ENCODE measurements at regions of chr20 and their contacts with region 1.

Region 1: DNA sequence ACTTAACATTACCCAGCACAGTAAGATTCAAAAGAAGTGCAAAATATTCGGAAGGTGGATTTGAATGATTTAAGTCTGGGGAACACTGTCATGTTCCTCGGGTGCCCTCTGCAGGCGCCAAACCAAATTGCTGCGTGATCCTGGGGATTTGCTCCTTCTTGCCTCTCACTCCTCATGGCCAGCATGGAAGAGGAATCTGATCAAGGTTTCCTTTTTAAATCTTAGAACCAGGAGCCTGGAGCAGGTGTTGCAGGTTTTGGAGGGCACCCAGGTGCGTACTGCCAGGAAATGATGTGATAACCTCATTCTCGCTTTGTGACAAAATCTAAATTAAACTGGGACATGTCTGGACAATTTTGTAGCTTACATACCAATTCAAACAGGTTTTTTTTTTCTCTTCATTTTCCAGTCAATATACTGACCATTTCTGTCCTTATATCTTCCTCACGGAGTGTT is 8.1 kb upstream of the PFDN4 start:
- H3K4me3 ChIP-seq: no peak overlapping the region
- H3K27ac ChIP-seq: no peak overlapping the region
- H3K4me1 ChIP-seq: no peaks in the 10 kb centered on the region
- CTCF ChIP-seq: peak; percentile 68

Region 2: GRCh38 chr20:54090056-54090816 is 109.5 kb before region 1 on chr20:
- CTCF ChIA-PET with region 1: interaction called, 361 read pairs
- POLR2A ChIA-PET with region 1: no interaction called
- H3K4me3 ChIP-seq: no peak overlapping the region
- H3K27ac ChIP-seq: no peak overlapping the region
- H3K4me1 ChIP-seq: no peaks in the 10 kb centered on the region
- CTCF ChIP-seq: no peak

Region 3: GRCh38 chr20:54097236-54097529 is 102.6 kb before region 1 on chr20:
- CTCF ChIA-PET with region 1: interaction called, 361 read pairs
- POLR2A ChIA-PET with region 1: no interaction called
- H3K4me3 ChIP-seq: no peak overlapping the region
- H3K27ac ChIP-seq: no peak overlapping the region
- H3K4me1 ChIP-seq: no peaks in the 10 kb centered on the region
- CTCF ChIP-seq: no peak

Region 4: DNA sequence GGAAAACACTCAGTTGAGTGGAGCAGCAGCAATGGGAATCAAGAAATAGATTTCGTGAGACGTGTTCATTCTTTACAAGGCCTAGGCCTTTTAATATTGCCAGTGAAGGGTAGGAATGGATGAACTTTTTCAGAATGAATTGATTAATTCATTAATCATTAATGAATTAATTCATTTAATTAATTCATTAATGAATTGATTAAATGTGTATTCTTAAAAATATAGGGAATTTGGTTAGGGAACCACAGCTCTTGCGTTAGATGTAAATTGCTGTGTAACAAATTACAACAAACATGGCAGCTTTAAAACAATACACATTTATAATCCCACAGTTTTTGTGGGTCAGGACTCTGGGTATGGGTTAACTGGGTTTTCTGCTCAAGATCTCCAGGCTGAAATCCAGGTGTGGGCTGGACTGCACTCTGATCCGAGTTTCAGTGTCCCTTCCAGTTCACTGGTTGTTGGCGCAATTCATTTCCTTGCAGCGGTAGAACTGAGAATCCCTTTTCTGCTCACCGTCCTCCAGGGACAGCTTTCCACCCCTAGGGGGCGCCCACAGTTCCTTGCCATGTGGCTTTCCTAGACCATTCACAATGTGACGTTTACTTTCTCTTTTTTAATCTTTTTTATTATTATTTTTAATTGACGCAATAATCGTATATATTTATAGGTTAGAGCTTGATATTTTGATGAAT is 96.5 kb before region 1 on chr20:
- CTCF ChIA-PET with region 1: interaction called, 361 read pairs
- POLR2A ChIA-PET with region 1: no interaction called
- H3K4me3 ChIP-seq: no peak overlapping the region
- H3K27ac ChIP-seq: no peak overlapping the region
- H3K4me1 ChIP-seq: no peaks in the 10 kb centered on the region
- CTCF ChIP-seq: peak; percentile 72

Region 5: GRCh38 chr20:54179946-54180345 is 19.8 kb before region 1 on chr20:
- CTCF ChIA-PET with region 1: interaction called, 23 read pairs
- POLR2A ChIA-PET with region 1: no interaction called
- H3K4me3 ChIP-seq: no peak overlapping the region
- H3K27ac ChIP-seq: no peak overlapping the region
- H3K4me1 ChIP-seq: no peaks in the 10 kb centered on the region
- CTCF ChIP-seq: no peak

Region 6: DNA sequence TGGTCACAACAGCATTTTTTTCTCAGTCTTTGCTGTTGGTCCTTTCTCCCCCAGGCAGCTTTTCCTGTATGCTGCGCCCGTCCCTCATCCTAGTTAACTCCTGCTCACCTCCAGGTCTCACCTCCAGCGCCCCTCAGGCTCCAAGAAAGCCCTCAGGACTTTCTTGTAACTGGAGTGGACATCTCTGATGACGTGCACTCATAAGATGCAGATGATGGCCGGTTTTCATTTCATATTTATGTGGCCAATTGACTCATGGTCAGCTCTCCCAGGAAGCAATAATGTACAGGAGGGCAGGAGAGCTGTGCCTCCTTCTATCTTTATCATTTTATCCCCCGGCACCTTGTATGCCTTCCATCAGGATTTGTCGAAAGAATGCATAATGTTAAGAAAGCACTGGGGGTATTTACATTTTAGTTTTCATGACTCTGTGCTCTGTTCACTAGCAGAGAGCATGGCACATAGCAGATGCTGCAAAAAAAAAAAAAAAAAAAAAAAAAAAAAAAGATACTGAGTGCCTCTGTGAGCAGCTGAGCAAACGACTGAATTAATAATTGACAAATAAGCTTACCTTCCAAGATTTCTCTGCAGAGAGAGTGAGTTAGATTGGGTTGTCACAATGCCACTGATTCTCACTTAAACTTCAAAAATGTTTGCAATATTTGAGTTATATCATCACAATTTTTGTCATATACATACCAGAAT is 445.9 kb after region 1 on chr20:
- CTCF ChIA-PET with region 1: interaction called, 25 read pairs
- POLR2A ChIA-PET with region 1: no interaction called
- H3K4me3 ChIP-seq: no peak overlapping the region
- H3K27ac ChIP-seq: no peak overlapping the region
- H3K4me1 ChIP-seq: no peaks in the 10 kb centered on the region
- CTCF ChIP-seq: no peak

Measured in HEK293 (cell line).